Transverse colon (tissue), 4 donors: ENCODE measurements at regions of chr11 and their contacts with region 1.

Region 1: GRCh38 chr11:125923012-125923579 is 18.8 kb downstream of the DDX25 start:
- DNase-seq: peak; percentile 68
- H3K4me3 ChIP-seq: no peak overlapping the region
- H3K27ac ChIP-seq: no peak overlapping the region
- H3K4me1 ChIP-seq: peaks cover 0 to 18% (median 4%) of the 10 kb centered on the region in 4 donors
- H3K27me3 ChIP-seq: peaks cover 20% of the 10 kb centered on the region
- CTCF ChIP-seq: peak; percentile 68 to 79 (median 76)
- EP300 ChIP-seq: no peak
- POLR2A ChIP-seq: no peak

Region 2: GRCh38 chr11:125720781-125721180 is 202.3 kb before region 1 on chr11:
- in situ Hi-C with region 1: no loop called
- intact Hi-C with region 1: no loop called
- DNase-seq: no peak
- H3K4me3 ChIP-seq: no peak overlapping the region
- H3K27ac ChIP-seq: no peak overlapping the region
- H3K4me1 ChIP-seq: no peaks in the 10 kb centered on the region
- H3K27me3 ChIP-seq: no peaks in the 10 kb centered on the region
- CTCF ChIP-seq: no peak
- EP300 ChIP-seq: no peak
- POLR2A ChIP-seq: no peak

Region 3: DNA sequence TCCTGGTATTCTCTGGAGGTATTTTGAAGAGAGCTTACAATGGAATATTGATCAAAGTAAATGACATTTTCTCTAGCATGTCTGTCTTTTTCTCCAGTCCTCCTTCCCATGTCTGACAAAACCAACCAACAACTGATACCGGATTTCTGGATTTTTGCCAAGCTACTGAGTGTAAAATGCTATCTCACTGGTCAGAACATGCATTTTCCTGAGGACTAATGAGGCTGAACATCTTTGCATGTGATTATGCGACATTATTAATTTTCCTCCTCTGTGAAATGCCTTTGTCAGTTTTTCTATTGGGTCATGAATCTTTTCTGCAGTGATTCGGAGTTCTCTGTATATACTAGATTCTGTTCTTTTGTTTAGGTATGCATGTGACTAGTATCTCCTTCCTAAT is 88.2 kb after region 1 on chr11:
- in situ Hi-C with region 1: no loop called
- intact Hi-C with region 1: no loop called
- DNase-seq: no peak
- H3K4me3 ChIP-seq: no peak overlapping the region
- H3K27ac ChIP-seq: no peak overlapping the region
- H3K4me1 ChIP-seq: peaks cover 0 to 13% (median 4%) of the 10 kb centered on the region in 4 donors
- H3K27me3 ChIP-seq: no peaks in the 10 kb centered on the region
- CTCF ChIP-seq: no peak
- EP300 ChIP-seq: no peak
- POLR2A ChIP-seq: no peak

Region 4: DNA sequence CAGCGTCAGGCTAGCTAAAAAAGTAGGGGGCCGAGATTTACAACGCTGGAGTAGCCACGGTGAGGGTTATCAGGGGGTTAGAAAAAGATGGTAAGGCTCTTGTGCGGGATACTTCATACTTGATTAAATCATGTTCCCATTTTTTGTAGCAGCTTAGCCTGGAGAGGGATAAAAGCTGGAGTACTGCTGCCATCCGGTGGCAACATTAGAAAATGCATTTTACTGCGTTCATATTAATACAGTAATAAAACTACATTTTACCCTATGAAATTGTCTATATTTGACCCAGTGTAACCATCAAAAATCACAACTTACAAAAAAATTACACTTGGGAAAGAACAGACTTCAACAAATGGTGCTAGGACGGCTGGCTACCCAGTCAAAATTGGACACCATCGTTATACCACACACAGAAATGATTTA is 271.0 kb after region 1 on chr11:
- in situ Hi-C with region 1: loop called in 3 of 4 experiments (anchors 5 to 10 kb)
- intact Hi-C with region 1: loop called (anchors 2 kb)
- DNase-seq: peak; percentile 55
- H3K4me3 ChIP-seq: no peak overlapping the region
- H3K27ac ChIP-seq: no peak overlapping the region
- H3K4me1 ChIP-seq: no peaks in the 10 kb centered on the region
- H3K27me3 ChIP-seq: no peaks in the 10 kb centered on the region
- CTCF ChIP-seq: peak; percentile 61 to 83 (median 68)
- EP300 ChIP-seq: no peak
- POLR2A ChIP-seq: no peak

Region 5: GRCh38 chr11:126202646-126203359 is 279.7 kb after region 1 on chr11:
- in situ Hi-C with region 1: loop called (anchors 5 to 10 kb)
- intact Hi-C with region 1: no loop called
- DNase-seq: no peak
- H3K4me3 ChIP-seq: no peak overlapping the region
- H3K27ac ChIP-seq: no peak overlapping the region
- H3K4me1 ChIP-seq: no peaks in the 10 kb centered on the region
- H3K27me3 ChIP-seq: no peaks in the 10 kb centered on the region
- CTCF ChIP-seq: no peak
- EP300 ChIP-seq: no peak
- POLR2A ChIP-seq: no peak